AG04450 (cell line): ENCODE measurements at regions of chr11 and their contacts with region 1.

Region 1: GRCh38 chr11:74929431-74930363 is 19.2 kb downstream of the XRRA1 start:
- DNase-seq: peak; percentile 87
- H3K4me3 ChIP-seq: no peak overlapping the region
- H3K27ac ChIP-seq: no peak overlapping the region
- H3K27me3 ChIP-seq: no peaks in the 10 kb centered on the region
- CTCF ChIP-seq: peak; percentile 91

Region 2: GRCh38 chr11:74783241-74783871 is 146.3 kb before region 1 on chr11:
- CTCF ChIA-PET with region 1: interaction called, 10 read pairs
- POLR2A ChIA-PET with region 1: no interaction called
- DNase-seq: no peak
- H3K4me3 ChIP-seq: no peak overlapping the region
- H3K27ac ChIP-seq: no peak overlapping the region
- H3K27me3 ChIP-seq: no peaks in the 10 kb centered on the region
- CTCF ChIP-seq: no peak

Region 3: GRCh38 chr11:75022759-75023396 is 93.2 kb after region 1 on chr11:
- CTCF ChIA-PET with region 1: interaction called, 15 read pairs
- POLR2A ChIA-PET with region 1: no interaction called
- DNase-seq: peak; percentile 72
- H3K4me3 ChIP-seq: no peak overlapping the region
- H3K27ac ChIP-seq: no peak overlapping the region
- H3K27me3 ChIP-seq: peaks cover 3% of the 10 kb centered on the region
- CTCF ChIP-seq: peak; percentile 99

Region 4: DNA sequence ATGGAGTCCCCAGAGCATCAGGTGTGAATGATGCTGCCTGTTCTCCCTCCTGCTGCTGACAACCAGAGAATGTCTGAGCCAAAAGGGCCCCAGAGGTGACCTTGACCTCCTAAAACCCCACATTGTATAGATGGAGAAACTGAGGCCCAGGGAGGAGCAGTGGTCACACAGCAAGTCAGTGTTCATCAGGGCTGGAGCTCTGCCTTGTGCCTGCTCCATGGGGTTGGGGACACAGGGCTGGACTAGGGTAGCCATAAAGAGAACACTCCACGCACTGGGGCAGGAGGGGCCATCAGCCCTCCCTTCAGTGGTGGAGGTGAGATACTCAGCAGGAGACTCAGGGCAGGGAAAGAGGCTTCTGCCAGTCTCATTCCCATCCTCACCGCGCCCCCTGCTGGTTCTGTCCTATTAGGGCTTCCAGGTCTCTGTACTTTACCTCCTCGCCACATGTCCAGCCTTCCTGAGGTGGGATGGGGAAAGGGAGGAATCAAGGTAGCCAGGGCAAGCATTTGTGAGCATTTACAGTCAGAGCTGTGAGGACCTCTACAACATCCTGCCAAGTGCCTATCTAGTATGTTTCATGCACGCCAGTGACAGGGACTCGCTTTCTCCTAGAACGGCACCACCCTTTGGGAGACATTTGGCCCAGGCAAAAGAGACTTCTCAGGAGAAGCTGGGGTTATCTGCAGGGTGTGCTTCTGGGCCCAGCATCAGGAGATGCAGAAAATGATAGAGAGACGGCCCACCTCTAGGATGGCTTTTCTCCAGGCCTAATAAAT is 102.3 kb after region 1 on chr11:
- CTCF ChIA-PET with region 1: interaction called, 40 read pairs
- POLR2A ChIA-PET with region 1: no interaction called
- DNase-seq: peak; percentile 49
- H3K4me3 ChIP-seq: no peak overlapping the region
- H3K27ac ChIP-seq: peak overlapping the region; percentile 82
- H3K27me3 ChIP-seq: no peaks in the 10 kb centered on the region
- CTCF ChIP-seq: peak; percentile 88

Region 5: DNA sequence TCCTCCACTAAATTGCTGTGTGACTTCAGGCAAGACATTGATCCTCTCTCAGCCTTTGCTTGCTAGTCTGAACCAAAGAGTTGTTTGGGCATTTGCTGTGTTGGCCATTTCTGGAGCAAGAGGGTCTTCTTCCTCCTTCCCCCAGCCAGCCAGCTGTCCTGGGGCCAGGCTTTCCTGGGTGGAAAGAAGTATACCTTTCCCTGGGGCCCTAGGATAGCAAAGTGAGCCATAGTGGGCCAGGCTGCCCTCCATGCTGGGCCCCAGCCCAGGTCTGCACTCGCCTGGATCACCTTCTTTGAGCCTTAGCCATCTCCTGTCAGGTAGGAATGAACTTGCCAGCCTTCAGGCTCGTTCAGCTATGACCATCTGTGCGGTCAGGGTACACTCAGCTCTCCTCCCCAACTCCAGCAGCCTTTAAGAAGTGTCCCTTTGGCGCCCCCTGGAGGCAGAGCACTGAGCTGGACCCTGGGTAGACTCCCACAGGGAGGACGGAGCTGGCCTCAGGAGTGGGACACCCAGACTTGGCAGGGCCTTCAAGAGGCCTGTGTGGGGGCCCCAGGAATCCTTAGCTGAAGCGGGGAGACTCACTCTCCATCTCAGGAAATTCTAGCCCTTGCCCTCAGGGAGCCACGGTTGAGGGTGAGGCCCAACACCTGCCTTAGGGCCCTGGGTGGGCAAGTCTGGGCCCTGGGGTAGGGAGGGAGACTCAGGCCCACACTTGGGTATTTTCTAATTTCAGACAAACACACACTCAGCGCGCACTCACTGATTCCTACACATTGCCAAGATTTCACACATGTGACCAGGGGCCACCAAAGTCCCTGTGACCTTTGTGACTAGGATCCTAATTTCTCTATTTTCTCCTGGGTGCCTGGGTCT is 275.2 kb after region 1 on chr11:
- CTCF ChIA-PET with region 1: interaction called, 97 read pairs
- POLR2A ChIA-PET with region 1: no interaction called
- DNase-seq: peak; percentile 53
- H3K4me3 ChIP-seq: no peak overlapping the region
- H3K27ac ChIP-seq: no peak overlapping the region
- H3K27me3 ChIP-seq: peaks cover 41% of the 10 kb centered on the region
- CTCF ChIP-seq: peak; percentile 95

Region 6: GRCh38 chr11:75241036-75241905 is 311.6 kb after region 1 on chr11:
- CTCF ChIA-PET with region 1: interaction called, 16 read pairs
- POLR2A ChIA-PET with region 1: no interaction called
- DNase-seq: peak; percentile 34
- H3K4me3 ChIP-seq: peak overlapping the region; percentile 60
- H3K27ac ChIP-seq: no peak overlapping the region
- H3K27me3 ChIP-seq: peaks cover 66% of the 10 kb centered on the region
- CTCF ChIP-seq: peak; percentile 51